Heart left ventricle (tissue), 16 donors: ENCODE measurements at regions of chr11 and their contacts with region 1.

Region 1: GRCh38 chr11:93476796-93477195 is 66.4 kb downstream of the SMCO4 start:
- DNase-seq: no peak
- ATAC-seq: no peak
- H3K4me3 ChIP-seq: no peak overlapping the region
- H3K27ac ChIP-seq: no peak overlapping the region
- H3K4me1 ChIP-seq: peaks cover 0 to 4% (median 0%) of the 10 kb centered on the region in 12 donors
- H3K27me3 ChIP-seq: no peaks in the 10 kb centered on the region
- CTCF ChIP-seq: no peak
- POLR2A ChIP-seq: no peak

Region 2: GRCh38 chr11:93234602-93235207 is 242.1 kb before region 1 on chr11:
- intact Hi-C with region 1: loop called in 1 of 10 experiments (anchors 10 kb)
- DNase-seq: peak; percentile 61 to 77 (median 74)
- ATAC-seq: peak; percentile 97 to 99 (median 97)
- H3K4me3 ChIP-seq: no peak overlapping the region
- H3K27ac ChIP-seq: no peak overlapping the region
- H3K4me1 ChIP-seq: peaks cover 0 to 2% (median 0%) of the 10 kb centered on the region in 12 donors
- H3K27me3 ChIP-seq: peaks cover 0 to 3% (median 0%) of the 10 kb centered on the region in 9 donors
- CTCF ChIP-seq: peak; percentile 85 to 95 (median 88)
- POLR2A ChIP-seq: no peak

Region 3: DNA sequence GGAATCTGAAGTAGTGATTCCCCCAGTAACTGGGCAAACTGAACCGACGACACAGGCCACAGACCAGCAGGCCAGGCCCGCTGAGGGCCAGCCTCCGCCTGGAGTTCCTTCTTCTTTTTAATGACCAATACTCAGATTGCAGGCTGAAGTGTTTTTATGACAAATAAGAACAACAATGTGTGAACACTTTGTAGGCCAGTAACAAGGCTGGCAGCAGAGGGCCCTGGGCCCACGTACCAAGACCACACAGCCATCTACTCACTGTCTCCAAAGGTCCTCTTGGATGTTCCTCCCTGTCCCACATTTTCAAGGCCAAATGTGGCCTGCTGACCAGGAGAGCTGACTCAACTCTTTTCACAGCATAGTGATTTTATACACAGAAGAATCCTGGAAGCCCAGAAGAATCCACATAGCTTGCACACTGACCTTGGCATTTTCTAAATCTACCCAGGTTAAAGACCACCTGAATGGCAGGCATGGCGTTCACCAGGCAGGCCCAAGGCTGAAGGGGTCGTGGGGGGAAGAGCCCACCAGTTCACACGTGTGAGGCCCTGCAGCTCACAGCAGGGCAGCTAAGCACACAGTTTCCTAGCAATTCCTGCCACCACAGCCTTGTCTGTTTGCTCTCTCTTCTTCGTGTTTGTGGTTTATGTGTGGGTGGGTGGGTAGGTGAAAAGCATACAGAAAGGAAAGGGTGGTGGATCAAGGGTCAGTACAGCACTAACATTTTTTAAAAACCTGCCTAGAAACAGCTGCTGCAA is 53.1 kb after region 1 on chr11:
- intact Hi-C with region 1: loop called in 1 of 10 experiments (anchors 5 kb)
- DNase-seq: peak in 2 of 5 donors; percentile 28 to 54
- ATAC-seq: peak in 2 of 4 donors; percentile 22 to 36
- H3K4me3 ChIP-seq: peak overlapping the region in 1 of 12 donors; percentile 0
- H3K27ac ChIP-seq: peak overlapping the region; percentile 60 to 91 (median 82)
- H3K4me1 ChIP-seq: peaks cover 20 to 88% (median 54%) of the 10 kb centered on the region in 12 donors
- H3K27me3 ChIP-seq: no peaks in the 10 kb centered on the region
- CTCF ChIP-seq: no peak
- POLR2A ChIP-seq: no peak

Region 4: DNA sequence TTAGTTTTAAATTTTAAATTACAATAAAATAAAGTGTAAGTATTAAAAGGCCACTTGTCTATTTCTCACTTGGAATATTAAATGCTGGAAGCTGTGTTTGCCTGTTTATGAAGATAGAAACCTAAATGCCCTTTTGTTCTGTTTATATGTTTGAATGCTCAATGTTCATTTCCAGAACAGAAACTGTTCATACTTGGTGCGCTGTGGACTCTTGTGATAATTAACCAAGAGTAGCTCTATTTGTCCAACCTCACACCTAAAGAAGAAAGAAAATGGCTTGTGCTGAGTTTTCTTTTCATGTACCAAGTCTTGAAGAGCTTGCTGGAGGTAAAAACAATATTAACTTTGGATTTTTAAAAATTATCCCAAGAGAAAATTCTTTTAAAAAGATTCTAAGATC is 270.3 kb after region 1 on chr11:
- intact Hi-C with region 1: no loop called
- DNase-seq: no peak
- ATAC-seq: no peak
- H3K4me3 ChIP-seq: no peak overlapping the region
- H3K27ac ChIP-seq: no peak overlapping the region
- H3K4me1 ChIP-seq: peaks cover 0 to 35% (median 15%) of the 10 kb centered on the region in 12 donors
- H3K27me3 ChIP-seq: no peaks in the 10 kb centered on the region
- CTCF ChIP-seq: no peak
- POLR2A ChIP-seq: no peak